Aorta (tissue), 5 donors: ENCODE measurements at regions of chr12 and their contacts with region 1.

Region 1: DNA sequence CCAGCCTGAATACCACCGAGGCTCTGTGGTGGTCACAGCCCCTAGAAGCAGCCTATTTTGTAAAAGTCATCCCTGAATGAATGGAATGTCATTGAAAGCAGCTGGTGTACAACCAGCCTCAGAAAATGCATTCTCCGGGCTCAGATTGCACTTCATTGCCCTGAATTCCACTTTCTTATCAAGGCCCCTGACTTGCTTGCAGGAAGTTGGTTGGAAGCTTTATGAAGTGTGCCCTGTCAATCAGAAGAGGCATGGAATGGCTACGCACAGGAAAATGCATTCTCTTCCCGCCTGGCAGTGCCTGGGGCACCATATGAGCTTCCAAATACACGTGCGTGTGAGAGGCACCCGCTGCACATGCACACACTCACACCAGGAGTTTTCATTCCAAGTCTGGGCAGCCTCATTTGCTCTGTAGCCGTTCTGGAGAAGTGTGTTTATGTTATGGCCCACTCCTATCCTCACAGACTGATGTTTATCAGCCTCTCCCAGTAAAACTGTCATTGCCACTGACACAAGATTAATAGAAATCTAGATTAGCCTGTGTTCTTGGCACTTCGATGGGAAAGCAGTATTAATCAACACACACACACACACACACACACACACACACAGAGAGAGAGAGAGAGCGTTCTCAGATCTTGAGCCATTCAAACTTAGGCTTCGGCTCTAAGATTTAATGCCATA is 63.9 kb downstream of the NUAK1 start:
- DNase-seq: peak in 1 of 2 donors; percentile 45
- ATAC-seq: peak; percentile 55
- H3K4me3 ChIP-seq: no peak overlapping the region
- H3K27ac ChIP-seq: peak overlapping the region; percentile 68 to 69
- H3K4me1 ChIP-seq: peaks cover 3 to 14% of the 10 kb centered on the region in 2 donors
- H3K27me3 ChIP-seq: no peaks in the 10 kb centered on the region

Region 2: GRCh38 chr12:106030210-106031175 is 44.4 kb before region 1 on chr12:
- intact Hi-C with region 1: loop called (anchors 5 kb)
- DNase-seq: no peak
- ATAC-seq: peak; percentile 12
- H3K4me3 ChIP-seq: peak overlapping the region in 1 of 2 donors; percentile 6
- H3K27ac ChIP-seq: peak overlapping the region in 1 of 2 donors; percentile 54
- H3K4me1 ChIP-seq: no peaks in the 10 kb centered on the region
- H3K27me3 ChIP-seq: no peaks in the 10 kb centered on the region